Heart right ventricle (tissue), 16 donors: ENCODE measurements at regions of chr1 and their contacts with region 1.

Region 1: DNA sequence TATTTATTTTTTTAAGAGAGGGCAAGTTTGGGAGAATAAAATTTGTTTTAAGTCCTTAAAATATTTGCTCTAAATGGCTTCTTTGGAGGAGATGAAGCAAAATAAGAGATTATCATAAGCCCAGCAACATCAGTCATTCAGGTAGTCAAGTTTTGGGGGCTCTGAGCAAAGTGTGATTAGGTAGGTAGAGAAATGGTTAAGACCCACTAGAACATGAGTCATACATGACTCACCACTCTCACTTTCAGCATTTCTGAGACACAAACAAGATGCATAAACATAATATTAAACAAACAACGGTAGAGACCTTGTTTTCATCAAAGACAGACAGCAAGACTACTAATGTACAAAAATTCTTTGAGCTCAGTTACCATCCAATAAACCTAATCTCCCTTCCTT is 272.2 kb downstream of the LMO4 start:
- DNase-seq: no peak
- ATAC-seq: no peak
- H3K4me3 ChIP-seq: no peak overlapping the region
- H3K27ac ChIP-seq: no peak overlapping the region
- H3K4me1 ChIP-seq: no peaks in the 10 kb centered on the region
- H3K27me3 ChIP-seq: no peaks in the 10 kb centered on the region
- CTCF ChIP-seq: no peak

Region 2: GRCh38 chr1:87644579-87645190 is 43.8 kb after region 1 on chr1:
- intact Hi-C with region 1: loop called in 1 of 10 experiments (anchors 5 kb)
- DNase-seq: no peak
- ATAC-seq: peak in 1 of 8 donors; percentile 39
- H3K4me3 ChIP-seq: no peak overlapping the region
- H3K27ac ChIP-seq: peak overlapping the region in 1 of 10 donors; percentile 37
- H3K4me1 ChIP-seq: peaks cover 0 to 17% (median 0%) of the 10 kb centered on the region in 9 donors
- H3K27me3 ChIP-seq: no peaks in the 10 kb centered on the region
- CTCF ChIP-seq: no peak